K562 (cell line): ENCODE measurements at regions of chr3 and their contacts with region 1.

Region 1: DNA sequence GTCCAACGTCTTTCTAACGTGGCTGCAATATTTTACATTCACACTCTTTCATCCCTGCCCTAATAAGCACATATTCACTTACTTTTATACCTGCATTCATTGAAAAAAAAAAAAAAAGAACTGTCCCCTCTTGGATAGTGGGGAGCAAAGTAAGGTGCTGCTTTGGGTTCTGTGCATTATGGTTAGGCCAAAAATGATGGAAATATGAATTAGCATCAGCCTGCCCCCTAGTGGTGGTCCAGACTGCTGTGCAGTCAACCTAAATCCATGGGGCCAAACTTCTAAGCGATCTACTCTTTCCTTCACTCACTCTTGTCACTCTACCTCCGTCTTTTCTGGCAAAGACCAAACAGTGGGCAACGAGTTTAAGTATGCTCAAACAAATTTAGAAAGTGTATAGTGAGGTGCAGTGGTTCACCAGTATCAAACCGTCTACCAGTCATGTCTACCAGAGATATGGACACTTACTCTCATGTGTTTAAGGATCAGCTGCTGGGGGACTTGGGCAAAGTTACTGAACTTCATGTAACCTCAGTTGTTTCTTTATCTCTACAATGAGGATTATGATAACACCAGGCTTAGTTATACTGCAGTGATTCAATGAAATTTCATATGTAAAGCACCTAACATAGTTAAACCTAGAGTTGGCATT is 61.5 kb upstream of the GRM7 start:
- DNase-seq: peak; percentile 57 to 75 (median 62)
- ATAC-seq: peak; percentile 97
- H3K4me3 ChIP-seq: no peak overlapping the region
- H3K27ac ChIP-seq: no peak overlapping the region
- H3K4me1 ChIP-seq: no peaks in the 10 kb centered on the region
- H3K27me3 ChIP-seq: no peaks in the 10 kb centered on the region
- CTCF ChIP-seq: peak; percentile 69 to 90 (median 84)
- EP300 ChIP-seq: no peak
- POLR2A ChIP-seq: no peak
- RAD21 ChIP-seq: peak; percentile 68 to 84

Region 2: GRCh38 chr3:5304789-5305683 is 1494.4 kb before region 1 on chr3:
- CTCF ChIA-PET with region 1: interaction called, 3 read pairs
- POLR2A ChIA-PET with region 1: no interaction called
- in situ Hi-C with region 1: loop called (anchors 25 kb)
- intact Hi-C with region 1: loop called (anchors 1 kb)
- DNase-seq: peak; percentile 56 to 70 (median 62)
- ATAC-seq: peak; percentile 94
- H3K4me3 ChIP-seq: no peak overlapping the region
- H3K27ac ChIP-seq: no peak overlapping the region
- H3K4me1 ChIP-seq: no peaks in the 10 kb centered on the region
- H3K27me3 ChIP-seq: peaks cover 15 to 19% of the 10 kb centered on the region in 2 experiments
- CTCF ChIP-seq: peak; percentile 69 to 87 (median 86)
- EP300 ChIP-seq: no peak
- POLR2A ChIP-seq: no peak
- RAD21 ChIP-seq: peak; percentile 92 to 94

Region 3: GRCh38 chr3:6204891-6205290 is 594.5 kb before region 1 on chr3:
- CTCF ChIA-PET with region 1: no interaction called
- POLR2A ChIA-PET with region 1: no interaction called
- in situ Hi-C with region 1: no loop called
- intact Hi-C with region 1: loop called (anchors 10 kb)
- DNase-seq: peak in 2 of 4 experiments; percentile 3 to 11
- ATAC-seq: no peak
- H3K4me3 ChIP-seq: no peak overlapping the region
- H3K27ac ChIP-seq: no peak overlapping the region
- H3K4me1 ChIP-seq: no peaks in the 10 kb centered on the region
- H3K27me3 ChIP-seq: no peaks in the 10 kb centered on the region
- CTCF ChIP-seq: peak in 2 of 3 experiments; percentile 24 to 32; a peak in 3 of 6 replicates
- EP300 ChIP-seq: no peak
- POLR2A ChIP-seq: no peak
- RAD21 ChIP-seq: peak; percentile 48 to 68; a peak in 3 of 4 replicates

Region 4: GRCh38 chr3:6367171-6367570 is 432.2 kb before region 1 on chr3:
- CTCF ChIA-PET with region 1: no interaction called
- POLR2A ChIA-PET with region 1: no interaction called
- in situ Hi-C with region 1: no loop called
- intact Hi-C with region 1: no loop called
- DNase-seq: no peak
- ATAC-seq: no peak
- H3K4me3 ChIP-seq: no peak overlapping the region
- H3K27ac ChIP-seq: no peak overlapping the region
- H3K4me1 ChIP-seq: no peaks in the 10 kb centered on the region
- H3K27me3 ChIP-seq: no peaks in the 10 kb centered on the region
- CTCF ChIP-seq: no peak
- EP300 ChIP-seq: no peak
- POLR2A ChIP-seq: no peak
- RAD21 ChIP-seq: no peak

Region 5: GRCh38 chr3:6392123-6392522 is 407.3 kb before region 1 on chr3:
- CTCF ChIA-PET with region 1: no interaction called
- POLR2A ChIA-PET with region 1: no interaction called
- in situ Hi-C with region 1: no loop called
- intact Hi-C with region 1: loop called (anchors 2 kb)
- DNase-seq: no peak
- ATAC-seq: peak; percentile 74
- H3K4me3 ChIP-seq: no peak overlapping the region
- H3K27ac ChIP-seq: no peak overlapping the region
- H3K4me1 ChIP-seq: no peaks in the 10 kb centered on the region
- H3K27me3 ChIP-seq: no peaks in the 10 kb centered on the region
- CTCF ChIP-seq: peak; percentile 15 to 40 (median 32); a peak in 2 of 6 replicates
- EP300 ChIP-seq: no peak
- POLR2A ChIP-seq: no peak
- RAD21 ChIP-seq: peak; percentile 29 to 57; a peak in 3 of 4 replicates

Region 6: DNA sequence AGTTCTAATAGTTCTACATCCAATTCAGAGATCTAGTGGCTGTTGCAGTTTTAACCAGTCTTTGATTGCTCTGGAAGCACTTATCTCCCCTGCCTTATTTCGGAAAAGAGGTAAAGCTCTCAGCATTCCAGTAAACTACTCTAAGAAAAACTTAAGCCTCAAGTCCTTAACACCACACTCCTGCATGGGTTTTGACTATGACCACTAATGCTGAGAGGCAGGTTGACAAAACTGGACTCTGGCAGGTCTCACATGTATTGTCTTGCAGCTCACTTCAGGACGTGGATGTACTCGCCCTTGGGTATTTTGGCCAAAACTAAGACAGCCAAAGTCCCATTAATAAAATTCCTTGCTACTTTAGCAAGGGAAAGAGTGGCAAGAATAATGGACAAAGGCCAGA is 344.4 kb before region 1 on chr3:
- CTCF ChIA-PET with region 1: no interaction called
- POLR2A ChIA-PET with region 1: no interaction called
- in situ Hi-C with region 1: no loop called
- intact Hi-C with region 1: loop called (anchors 10 kb)
- DNase-seq: no peak
- ATAC-seq: peak; percentile 38; the same call in 1 of the 3 replicates
- H3K4me3 ChIP-seq: no peak overlapping the region
- H3K27ac ChIP-seq: no peak overlapping the region
- H3K4me1 ChIP-seq: no peaks in the 10 kb centered on the region
- H3K27me3 ChIP-seq: no peaks in the 10 kb centered on the region
- CTCF ChIP-seq: no peak
- EP300 ChIP-seq: no peak
- POLR2A ChIP-seq: no peak
- RAD21 ChIP-seq: no peak

Region 7: GRCh38 chr3:8416965-8417364 is 1617.6 kb after region 1 on chr3:
- CTCF ChIA-PET with region 1: no interaction called
- POLR2A ChIA-PET with region 1: no interaction called
- in situ Hi-C with region 1: no loop called
- intact Hi-C with region 1: loop called (anchors 5 kb)
- DNase-seq: peak; percentile 34 to 46 (median 38)
- ATAC-seq: peak; percentile 98
- H3K4me3 ChIP-seq: no peak overlapping the region
- H3K27ac ChIP-seq: no peak overlapping the region
- H3K4me1 ChIP-seq: no peaks in the 10 kb centered on the region
- H3K27me3 ChIP-seq: no peaks in the 10 kb centered on the region
- CTCF ChIP-seq: no peak
- EP300 ChIP-seq: no peak
- POLR2A ChIP-seq: no peak
- RAD21 ChIP-seq: no peak